ENCODE measurements at regions of chr17 and their contacts with region 1.

Region 1: GRCh38 chr17:10360578-10360977 is 12.2 kb downstream of the MYH13 start:
- DNase-seq: no peak
- ATAC-seq: no peak
- H3K4me3 ChIP-seq: no peak overlapping the region
- H3K27ac ChIP-seq: no peak overlapping the region
- H3K4me1 ChIP-seq: no peaks in the 10 kb centered on the region
- H3K27me3 ChIP-seq: no peaks in the 10 kb centered on the region
- CTCF ChIP-seq: no peak

Region 2: GRCh38 chr17:10309003-10309834 is 51.4 kb before region 1 on chr17:
- intact Hi-C with region 1: loop called in 1 of 3 experiments (anchors 10 kb)
- DNase-seq: no peak
- ATAC-seq: no peak
- H3K4me3 ChIP-seq: no peak overlapping the region
- H3K27ac ChIP-seq: no peak overlapping the region
- H3K4me1 ChIP-seq: no peaks in the 10 kb centered on the region
- H3K27me3 ChIP-seq: no peaks in the 10 kb centered on the region
- CTCF ChIP-seq: no peak